ENCODE measurements at regions of chr16 and their contacts with region 1.

Region 1: DNA sequence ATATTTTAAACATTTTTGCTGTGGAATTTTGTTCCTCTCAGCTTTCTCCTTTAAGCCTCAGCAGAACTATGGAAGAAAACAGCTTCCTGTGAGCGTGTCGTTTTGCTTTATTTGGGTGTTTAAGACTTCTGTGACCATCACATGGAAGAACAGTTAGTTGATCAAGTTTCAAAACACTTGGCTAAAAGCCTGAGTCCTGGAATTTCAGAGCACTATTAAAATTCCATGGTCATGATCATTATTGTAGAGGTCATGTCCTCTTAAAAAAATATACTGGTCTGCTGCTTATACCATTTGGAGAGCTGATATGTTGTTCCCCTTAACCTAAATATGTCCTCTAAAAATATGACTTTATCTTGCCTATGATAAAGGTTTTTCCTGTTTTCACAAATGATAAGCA is 12.6 kb upstream of the CDR2 start:
- DNase-seq: no peak
- H3K4me3 ChIP-seq: no peak overlapping the region
- H3K27ac ChIP-seq: no peak overlapping the region
- H3K4me1 ChIP-seq: no peaks in the 10 kb centered on the region
- H3K27me3 ChIP-seq: no peaks in the 10 kb centered on the region
- CTCF ChIP-seq: no peak
- EP300 ChIP-seq: no peak
- POLR2A ChIP-seq: no peak
- RAD21 ChIP-seq: no peak

Region 2: GRCh38 chr16:22397464-22397863 is 10.5 kb after region 1 on chr16:
- CTCF ChIA-PET with region 1: interaction called, 3 read pairs
- POLR2A ChIA-PET with region 1: interaction called, 10 read pairs
- DNase-seq: no peak
- H3K4me3 ChIP-seq: no peak overlapping the region
- H3K27ac ChIP-seq: no peak overlapping the region
- H3K4me1 ChIP-seq: no peaks in the 10 kb centered on the region
- H3K27me3 ChIP-seq: no peaks in the 10 kb centered on the region
- CTCF ChIP-seq: no peak
- EP300 ChIP-seq: no peak
- POLR2A ChIP-seq: no peak
- RAD21 ChIP-seq: no peak

Measured in H1 (cell line).